ENCODE measurements at regions of chr2 and their contacts with region 1.

Region 1: GRCh38 chr2:85420536-85421259 is 2.2 kb downstream of the SH2D6 start:
- DNase-seq: peak; percentile 86 to 96 (median 89)
- ATAC-seq: peak; percentile 76 to 83 (median 80)
- H3K4me3 ChIP-seq: peak overlapping the region in 9 of 12 donors; percentile 14 to 45 (median 19)
- H3K27ac ChIP-seq: peak overlapping the region; percentile 48 to 95 (median 66)
- H3K4me1 ChIP-seq: peaks cover 5 to 42% (median 24%) of the 10 kb centered on the region in 12 donors
- H3K27me3 ChIP-seq: no peaks in the 10 kb centered on the region
- CTCF ChIP-seq: peak in 11 of 12 donors; percentile 98 to 100 (median 100)
- POLR2A ChIP-seq: no peak

Region 2: GRCh38 chr2:85551698-85552678 is 131.3 kb after region 1 on chr2:
- intact Hi-C with region 1: loop called (anchors 1 to 2 kb)
- DNase-seq: peak; percentile 71 to 85 (median 79)
- ATAC-seq: peak; percentile 55 to 75 (median 64)
- H3K4me3 ChIP-seq: no peak overlapping the region
- H3K27ac ChIP-seq: peak overlapping the region in 2 of 12 donors; percentile 17 to 55
- H3K4me1 ChIP-seq: peaks cover 0 to 26% (median 0%) of the 10 kb centered on the region in 12 donors
- H3K27me3 ChIP-seq: no peaks in the 10 kb centered on the region
- CTCF ChIP-seq: peak; percentile 83 to 95 (median 90)
- POLR2A ChIP-seq: no peak

Region 3: GRCh38 chr2:85602476-85603234 is 182.0 kb after region 1 on chr2 and contains the start of gene TMEM150A:
- intact Hi-C with region 1: loop called in 1 of 10 experiments (anchors 5 kb)
- DNase-seq: peak; percentile 95 to 98 (median 96)
- ATAC-seq: peak; percentile 83 to 96 (median 94)
- H3K4me3 ChIP-seq: peak within 1 kb of the TSS; percentile 59 to 87 (median 77)
- H3K27ac ChIP-seq: peak within 1 kb of the TSS; percentile 78 to 93 (median 88)
- H3K4me1 ChIP-seq: peaks cover 0 to 61% (median 48%) of the 10 kb centered on the region in 12 donors
- H3K27me3 ChIP-seq: no peaks in the 10 kb centered on the region
- CTCF ChIP-seq: peak; percentile 12 to 67 (median 48)
- POLR2A ChIP-seq: peak; percentile 56 to 97
- total RNA-seq, gene TMEM150A: 6.4 to 20.8 (median 11.5) TPM

Region 4: GRCh38 chr2:85619617-85620016 is 198.9 kb after region 1 on chr2:
- intact Hi-C with region 1: loop called in 1 of 10 experiments (anchors 5 kb)
- DNase-seq: no peak
- ATAC-seq: no peak
- H3K4me3 ChIP-seq: no peak overlapping the region
- H3K27ac ChIP-seq: no peak overlapping the region
- H3K4me1 ChIP-seq: peaks cover 3 to 44% (median 24%) of the 10 kb centered on the region in 12 donors
- H3K27me3 ChIP-seq: no peaks in the 10 kb centered on the region
- CTCF ChIP-seq: no peak
- POLR2A ChIP-seq: no peak